HCT116 (cell line): ENCODE measurements at regions of chr10 and their contacts with region 1.

Region 1: DNA sequence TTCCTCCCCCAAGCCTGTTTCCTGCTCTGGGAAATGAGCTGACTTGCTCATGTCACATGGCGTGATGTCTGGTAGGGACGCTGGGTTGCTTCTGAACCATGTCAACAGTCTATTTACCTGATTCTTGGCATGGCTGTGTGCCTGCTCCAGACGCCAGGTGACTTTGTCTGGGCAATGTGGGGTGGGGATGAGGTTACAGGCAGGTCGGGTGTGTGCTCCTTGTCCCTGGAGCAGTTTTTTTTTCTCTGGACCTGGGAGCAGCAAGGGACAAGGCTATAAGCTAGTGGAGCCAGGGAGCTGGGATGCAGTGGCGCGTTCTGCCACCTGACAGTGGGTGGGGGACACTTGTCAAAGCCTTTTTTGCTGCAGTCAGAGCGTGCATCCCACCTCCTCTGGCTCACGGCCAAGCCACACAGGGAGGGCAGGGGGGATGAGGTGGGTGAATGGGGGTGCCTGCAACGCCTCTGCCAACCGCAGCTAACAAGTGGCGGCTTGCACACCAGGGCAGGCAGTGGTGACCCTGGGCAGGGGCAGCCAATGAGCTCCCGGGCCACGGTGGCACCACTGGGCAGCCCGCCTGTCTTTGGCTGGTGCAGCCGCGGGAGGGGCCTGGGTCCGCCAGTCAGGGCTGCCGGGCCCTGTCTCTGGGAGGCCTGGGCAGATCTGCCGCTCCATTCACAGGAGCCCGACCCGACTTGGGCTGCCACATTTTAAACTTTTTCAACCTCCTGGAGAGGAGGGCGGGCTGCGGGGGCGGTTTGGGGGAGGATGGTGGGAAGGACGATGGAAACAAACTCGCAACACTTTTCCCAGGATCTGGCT is 22.9 kb downstream of the DNAJB12 start:
- DNase-seq: peak; percentile 80
- ATAC-seq: peak; percentile 92
- H3K4me3 ChIP-seq: peak overlapping the region; percentile 22 to 28
- H3K27ac ChIP-seq: peak overlapping the region; percentile 92
- H3K4me1 ChIP-seq: peaks cover 50 to 63% of the 10 kb centered on the region in 2 experiments
- H3K27me3 ChIP-seq: no peaks in the 10 kb centered on the region
- CTCF ChIP-seq: peak in 2 of 3 experiments; percentile 38 to 50; a peak in 3 of 6 replicates
- POLR2A ChIP-seq: peak; percentile 36
- RAD21 ChIP-seq: no peak

Region 2: DNA sequence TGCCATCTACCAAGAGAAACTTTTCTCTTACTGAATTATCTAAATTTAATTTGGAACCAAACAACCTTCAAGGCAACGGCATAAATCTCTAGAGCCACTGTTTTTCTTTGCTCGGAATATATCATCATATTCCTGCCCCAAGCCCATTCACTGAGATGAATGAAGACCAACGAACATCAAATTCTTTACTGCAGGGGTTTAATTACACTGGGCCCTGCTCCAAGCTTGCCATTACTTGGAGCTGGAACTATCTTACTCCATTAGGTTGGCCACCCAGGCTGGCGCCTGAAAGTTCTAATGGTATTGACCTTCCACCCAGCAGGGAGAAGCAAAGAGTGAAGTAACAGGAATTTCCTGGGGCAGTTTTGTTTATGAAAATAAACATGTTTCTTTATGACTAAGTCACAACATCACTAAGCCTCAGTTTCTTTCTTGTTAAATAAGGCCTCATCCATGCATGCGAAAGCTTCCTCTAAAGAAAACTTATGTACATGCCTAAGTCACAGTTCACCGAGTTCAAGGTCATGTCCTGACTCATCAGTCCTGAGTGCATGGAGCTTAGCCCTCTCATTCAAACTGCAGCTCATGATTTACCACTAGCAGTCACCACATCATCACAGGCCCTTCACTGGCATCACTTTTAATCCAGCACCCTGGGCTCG is 158.0 kb before region 1 on chr10:
- CTCF ChIA-PET with region 1: no interaction called
- POLR2A ChIA-PET with region 1: no interaction called
- RAD21 ChIA-PET with region 1: no interaction called
- intact Hi-C with region 1: loop called (anchors 5 kb)
- DNase-seq: peak; percentile 27
- ATAC-seq: peak; percentile 13; the same call in 1 of the 2 replicates
- H3K4me3 ChIP-seq: no peak overlapping the region
- H3K27ac ChIP-seq: peak overlapping the region; percentile 74
- H3K4me1 ChIP-seq: peaks cover 64 to 69% of the 10 kb centered on the region in 2 experiments
- H3K27me3 ChIP-seq: no peaks in the 10 kb centered on the region
- CTCF ChIP-seq: no peak
- POLR2A ChIP-seq: no peak
- RAD21 ChIP-seq: no peak

Region 3: GRCh38 chr10:72223743-72224101 is 108.1 kb before region 1 on chr10:
- CTCF ChIA-PET with region 1: interaction called, 4 read pairs
- POLR2A ChIA-PET with region 1: no interaction called
- RAD21 ChIA-PET with region 1: no interaction called
- intact Hi-C with region 1: loop called (anchors 2 kb)
- DNase-seq: no peak
- ATAC-seq: no peak
- H3K4me3 ChIP-seq: no peak overlapping the region
- H3K27ac ChIP-seq: no peak overlapping the region
- H3K4me1 ChIP-seq: peaks cover 0 to 3% of the 10 kb centered on the region in 2 experiments; a peak in 2 of 4 replicates
- H3K27me3 ChIP-seq: no peaks in the 10 kb centered on the region
- CTCF ChIP-seq: no peak
- POLR2A ChIP-seq: no peak
- RAD21 ChIP-seq: no peak

Region 4: GRCh38 chr10:72308320-72308987 is 23.4 kb before region 1 on chr10:
- CTCF ChIA-PET with region 1: interaction called, 4 read pairs
- POLR2A ChIA-PET with region 1: interaction called, 123 read pairs
- RAD21 ChIA-PET with region 1: no interaction called
- intact Hi-C with region 1: no loop called
- DNase-seq: peak; percentile 82
- ATAC-seq: peak; percentile 74
- H3K4me3 ChIP-seq: peak overlapping the region in 1 of 2 experiments; percentile 5; a peak in 1 of 4 replicates
- H3K27ac ChIP-seq: peak overlapping the region; percentile 54
- H3K4me1 ChIP-seq: peaks cover 30 to 53% of the 10 kb centered on the region in 2 experiments
- H3K27me3 ChIP-seq: no peaks in the 10 kb centered on the region
- CTCF ChIP-seq: no peak
- POLR2A ChIP-seq: no peak
- RAD21 ChIP-seq: no peak